Body of pancreas (tissue), 4 donors: ENCODE measurements at regions of chr1 and their contacts with region 1.

Region 1: GRCh38 chr1:15128520-15129313 is 24.8 kb upstream of the TMEM51 start:
- DNase-seq: peak; percentile 79 to 87 (median 83)
- ATAC-seq: peak; percentile 92
- H3K4me3 ChIP-seq: no peak overlapping the region
- H3K27ac ChIP-seq: peak overlapping the region in 3 of 4 donors; percentile 36 to 40 (median 37)
- H3K4me1 ChIP-seq: peaks cover 42% of the 10 kb centered on the region
- H3K27me3 ChIP-seq: no peaks in the 10 kb centered on the region
- CTCF ChIP-seq: peak; percentile 78 to 94 (median 92)
- POLR2A ChIP-seq: peak in 1 of 3 donors; percentile 8

Region 2: GRCh38 chr1:13911697-13912619 is 1216.8 kb before region 1 on chr1:
- intact Hi-C with region 1: no loop called
- DNase-seq: no peak
- ATAC-seq: no peak
- H3K4me3 ChIP-seq: no peak overlapping the region
- H3K27ac ChIP-seq: no peak overlapping the region
- H3K4me1 ChIP-seq: no peaks in the 10 kb centered on the region
- H3K27me3 ChIP-seq: no peaks in the 10 kb centered on the region
- CTCF ChIP-seq: no peak
- POLR2A ChIP-seq: no peak

Region 3: GRCh38 chr1:15075817-15076216 is 52.9 kb before region 1 on chr1:
- intact Hi-C with region 1: no loop called
- DNase-seq: no peak
- ATAC-seq: no peak
- H3K4me3 ChIP-seq: no peak overlapping the region
- H3K27ac ChIP-seq: no peak overlapping the region
- H3K4me1 ChIP-seq: no peaks in the 10 kb centered on the region
- H3K27me3 ChIP-seq: no peaks in the 10 kb centered on the region
- CTCF ChIP-seq: no peak
- POLR2A ChIP-seq: no peak

Region 4: GRCh38 chr1:15272009-15272788 is 143.5 kb after region 1 on chr1:
- intact Hi-C with region 1: loop called (anchors 5 kb)
- DNase-seq: peak; percentile 73 to 87 (median 78)
- ATAC-seq: peak; percentile 98
- H3K4me3 ChIP-seq: no peak overlapping the region
- H3K27ac ChIP-seq: no peak overlapping the region
- H3K4me1 ChIP-seq: peaks cover 9% of the 10 kb centered on the region
- H3K27me3 ChIP-seq: no peaks in the 10 kb centered on the region
- CTCF ChIP-seq: peak; percentile 55 to 93 (median 92)
- POLR2A ChIP-seq: no peak

Region 5: DNA sequence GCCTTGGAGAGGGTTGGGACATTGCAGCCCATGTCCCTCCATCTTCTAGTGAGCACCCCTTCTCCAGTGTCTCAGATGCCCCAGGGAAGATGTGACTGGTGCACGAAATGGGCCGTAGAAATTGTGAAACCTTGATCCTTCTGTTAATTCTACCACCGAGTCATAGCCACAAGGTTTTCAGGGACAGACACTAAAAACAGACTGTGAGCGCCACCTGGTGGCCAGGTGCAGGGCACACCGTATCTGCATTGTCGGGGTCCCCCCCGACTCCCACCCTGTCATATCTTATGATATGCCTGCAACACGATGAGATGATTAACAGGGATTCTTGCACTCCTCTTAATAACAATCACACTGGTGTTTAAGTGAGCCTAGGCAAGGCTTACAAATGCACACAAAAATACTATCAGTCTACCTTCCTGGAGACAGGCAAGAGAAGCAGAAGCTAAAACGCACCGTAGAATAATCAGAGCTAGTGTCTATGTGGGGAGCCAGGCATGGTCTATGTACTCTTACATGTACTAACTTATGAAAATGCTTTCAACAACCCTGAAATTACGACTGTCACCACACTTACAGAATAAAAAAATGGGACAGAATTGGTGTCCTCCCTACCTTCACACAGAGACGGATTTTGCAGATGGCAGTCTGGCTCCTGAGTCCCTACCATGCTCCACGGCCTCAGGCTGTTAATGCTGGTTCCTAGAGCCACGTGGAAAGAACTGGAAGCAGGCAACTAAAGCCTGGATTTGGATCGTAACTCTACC is 176.2 kb after region 1 on chr1:
- intact Hi-C with region 1: loop called (anchors 10 kb)
- DNase-seq: peak; percentile 70 to 85 (median 73)
- ATAC-seq: peak; percentile 65
- H3K4me3 ChIP-seq: no peak overlapping the region
- H3K27ac ChIP-seq: peak overlapping the region in 1 of 4 donors; percentile 2
- H3K4me1 ChIP-seq: peaks cover 26% of the 10 kb centered on the region
- H3K27me3 ChIP-seq: no peaks in the 10 kb centered on the region
- CTCF ChIP-seq: peak; percentile 78 to 95 (median 87)
- POLR2A ChIP-seq: no peak